A549 (cell line): ENCODE measurements at regions of chr4 and their contacts with region 1.

Region 1: DNA sequence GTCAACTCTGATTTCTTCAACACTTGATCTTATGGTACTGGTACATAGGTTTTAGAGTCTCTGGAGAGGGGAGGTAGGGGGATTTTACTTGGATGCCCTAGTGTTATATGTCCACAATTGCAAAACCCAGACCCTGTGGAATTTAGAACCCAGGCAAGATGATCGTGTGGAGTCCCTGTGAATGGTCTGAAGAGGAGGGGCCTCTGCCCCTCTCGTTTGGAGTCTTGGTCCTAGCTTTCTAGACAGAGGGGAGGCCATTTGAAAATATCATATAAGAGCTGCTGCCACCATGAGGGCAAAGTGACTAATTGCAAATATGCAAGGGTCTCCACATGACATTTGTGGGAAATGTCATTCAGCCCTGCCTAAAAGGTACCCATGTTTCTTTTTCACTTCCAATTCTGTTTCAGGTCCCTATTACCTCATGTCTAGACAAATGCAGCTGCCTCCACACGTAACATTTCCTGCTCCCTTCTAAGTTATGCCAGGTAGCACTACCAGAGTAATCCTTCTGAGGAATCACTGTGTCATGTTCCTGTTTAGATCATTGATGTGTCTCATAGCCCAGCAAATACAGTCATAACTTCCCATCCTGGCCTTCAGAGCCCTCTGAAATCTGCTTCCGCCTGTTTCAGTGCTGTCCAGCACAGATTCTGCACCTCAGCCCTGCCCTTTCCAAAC is 126.8 kb downstream of the KLHL8 start:
- DNase-seq: peak; percentile 55 to 56
- ATAC-seq: peak; percentile 78 to 85
- H3K4me3 ChIP-seq: no peak overlapping the region
- H3K27ac ChIP-seq: peak overlapping the region; percentile 66 to 82
- H3K4me1 ChIP-seq: peaks cover 38% of the 10 kb centered on the region
- CTCF ChIP-seq: peak; percentile 63
- EP300 ChIP-seq: no peak
- POLR2A ChIP-seq: no peak
- RAD21 ChIP-seq: peak; percentile 68 to 72

Region 2: DNA sequence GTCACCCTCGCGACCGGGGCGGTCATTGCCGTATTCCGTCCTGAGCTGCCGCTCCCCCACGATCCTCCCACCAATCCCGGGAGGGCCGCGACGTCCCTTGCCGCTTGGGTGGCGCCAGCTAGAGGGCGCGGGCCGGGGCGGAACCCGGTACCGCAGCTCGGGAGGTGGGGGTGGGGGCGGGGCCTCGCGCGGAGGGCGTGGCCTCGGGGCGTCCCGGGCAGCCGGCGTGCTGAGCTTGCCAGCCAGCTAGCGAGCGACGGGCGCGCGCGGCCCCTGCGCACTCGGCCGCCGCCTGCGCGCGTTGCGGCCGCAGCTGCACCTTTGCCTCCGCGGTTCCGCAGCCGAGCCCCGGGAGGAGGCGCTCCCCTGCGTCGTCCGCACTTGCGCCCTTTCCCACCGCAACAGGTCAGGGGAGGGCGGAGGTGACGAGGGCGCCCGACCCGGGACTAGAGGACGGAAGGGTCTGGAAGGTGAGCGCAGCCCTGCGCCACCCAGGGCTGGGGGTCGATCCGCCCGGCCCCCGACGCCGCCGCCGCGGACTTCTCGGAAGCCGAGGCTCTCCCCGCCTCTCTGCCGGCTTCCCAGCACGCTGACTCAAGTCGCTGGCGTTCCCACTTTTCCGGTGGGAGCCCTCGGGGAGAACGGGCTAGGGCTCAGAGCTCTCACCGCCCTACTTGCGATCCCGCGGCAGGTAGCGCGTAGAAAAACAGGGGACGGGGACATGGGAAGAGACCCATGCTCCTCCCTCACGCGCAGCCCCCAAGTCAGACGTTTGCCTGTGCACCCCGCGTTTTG is 158.6 kb before region 1 on chr4 and contains the start of gene AFF1:
- CTCF ChIA-PET with region 1: interaction called, 12 read pairs
- POLR2A ChIA-PET with region 1: interaction called, 14 read pairs
- DNase-seq: peak; percentile 75 to 93
- ATAC-seq: peak; percentile 77 to 83
- H3K4me3 ChIP-seq: peak within 1 kb of the TSS; percentile 78
- H3K27ac ChIP-seq: peak within 1 kb of the TSS; percentile 89 to 98
- H3K4me1 ChIP-seq: peaks cover 40% of the 10 kb centered on the region
- CTCF ChIP-seq: peak; percentile 18; the same call in 1 of the 3 replicates
- EP300 ChIP-seq: no peak
- POLR2A ChIP-seq: peak; percentile 78
- RAD21 ChIP-seq: peak in 1 of 2 experiments; percentile 30; a peak in 1 of 5 replicates
- polyA plus RNA-seq, gene AFF1: 15.4 and 29.8 TPM in 2 replicates

Region 3: GRCh38 chr4:87078987-87079486 is 14.5 kb before region 1 on chr4:
- CTCF ChIA-PET with region 1: interaction called, 13 read pairs
- POLR2A ChIA-PET with region 1: no interaction called
- DNase-seq: no peak
- ATAC-seq: no peak
- H3K4me3 ChIP-seq: no peak overlapping the region
- H3K27ac ChIP-seq: no peak overlapping the region
- H3K4me1 ChIP-seq: peaks cover 26% of the 10 kb centered on the region; the same call in 1 of the 3 replicates
- CTCF ChIP-seq: no peak
- EP300 ChIP-seq: no peak
- POLR2A ChIP-seq: no peak
- RAD21 ChIP-seq: no peak

Region 4: GRCh38 chr4:87150498-87151261 is 57.1 kb after region 1 on chr4:
- CTCF ChIA-PET with region 1: no interaction called
- POLR2A ChIA-PET with region 1: no interaction called
- DNase-seq: peak; percentile 13 to 63
- ATAC-seq: peak; percentile 62 to 79; a peak in 4 of 6 replicates
- H3K4me3 ChIP-seq: no peak overlapping the region
- H3K27ac ChIP-seq: no peak overlapping the region
- H3K4me1 ChIP-seq: no peaks in the 10 kb centered on the region
- CTCF ChIP-seq: peak; percentile 72
- EP300 ChIP-seq: no peak
- POLR2A ChIP-seq: no peak
- RAD21 ChIP-seq: peak; percentile 70 to 76